ENCODE measurements at regions of chr9 and their contacts with region 1.

Region 1: DNA sequence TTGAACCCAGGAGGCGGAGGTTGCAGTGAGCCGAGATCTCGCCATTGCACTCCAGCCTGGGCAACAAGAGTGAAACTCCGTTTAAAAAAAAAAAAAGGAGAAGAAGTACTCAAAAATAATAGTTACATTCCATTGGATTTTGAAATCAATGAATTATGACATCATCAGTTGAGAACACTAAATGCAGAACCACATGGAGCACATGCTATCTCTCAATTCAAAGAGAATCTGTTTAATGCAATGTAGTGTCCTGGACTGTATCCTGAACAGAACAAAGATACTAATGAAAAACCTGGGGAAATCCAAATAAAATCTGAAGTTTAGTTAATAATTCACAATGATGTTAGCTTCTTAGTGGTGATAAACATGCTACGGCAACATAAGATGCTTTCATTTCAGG is 20.3 kb downstream of the CDC14B start:
- DNase-seq: no peak
- ATAC-seq: no peak
- H3K4me3 ChIP-seq: no peak overlapping the region
- H3K27ac ChIP-seq: no peak overlapping the region
- H3K4me1 ChIP-seq: no peaks in the 10 kb centered on the region
- H3K27me3 ChIP-seq: no peaks in the 10 kb centered on the region

Region 2: DNA sequence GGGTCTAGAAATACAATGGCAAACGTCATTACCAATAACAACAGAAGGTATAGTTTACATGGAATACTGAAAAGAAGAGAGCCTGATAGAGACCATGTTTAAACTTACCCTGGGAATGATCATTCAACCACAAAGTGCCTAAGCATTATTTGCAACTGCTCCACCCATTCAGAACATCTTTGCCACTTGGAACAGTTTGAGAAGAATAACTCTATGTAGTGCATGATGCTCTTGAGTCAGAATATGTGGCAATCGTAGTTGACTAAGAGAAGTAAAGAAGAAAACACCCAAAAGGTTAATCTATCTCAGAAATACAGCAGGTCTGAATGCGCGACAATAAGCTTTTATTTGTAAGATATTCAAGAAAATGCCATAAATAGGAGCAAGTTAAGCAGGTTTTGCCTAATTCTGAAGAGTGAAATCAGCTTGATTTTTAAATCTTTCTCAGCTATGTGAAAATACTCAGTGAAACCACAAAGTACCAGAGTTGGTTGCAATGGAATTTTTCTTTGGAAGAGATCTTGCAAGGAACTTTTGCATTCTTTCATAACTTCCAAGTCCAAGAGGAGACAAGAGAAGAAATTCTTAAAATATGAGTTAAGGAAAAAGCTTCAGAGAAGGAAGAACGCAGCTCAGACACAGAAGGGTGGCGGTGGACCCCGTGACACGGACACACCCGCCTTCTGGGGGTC is 85.0 kb before region 1 on chr9:
- intact Hi-C with region 1: loop called in 1 of 4 experiments (anchors 10 kb)
- DNase-seq: no peak
- ATAC-seq: no peak
- H3K4me3 ChIP-seq: no peak overlapping the region
- H3K27ac ChIP-seq: peak overlapping the region; percentile 20
- H3K4me1 ChIP-seq: no peaks in the 10 kb centered on the region
- H3K27me3 ChIP-seq: no peaks in the 10 kb centered on the region

Region 3: GRCh38 chr9:96644137-96644536 is 44.8 kb after region 1 on chr9:
- intact Hi-C with region 1: no loop called
- DNase-seq: no peak
- ATAC-seq: no peak
- H3K4me3 ChIP-seq: no peak overlapping the region
- H3K27ac ChIP-seq: no peak overlapping the region
- H3K4me1 ChIP-seq: no peaks in the 10 kb centered on the region
- H3K27me3 ChIP-seq: no peaks in the 10 kb centered on the region

Region 4: GRCh38 chr9:96654443-96655197 is 55.3 kb after region 1 on chr9:
- intact Hi-C with region 1: no loop called
- DNase-seq: peak; percentile 93 to 96 (median 96)
- ATAC-seq: peak; percentile 91 to 93
- H3K4me3 ChIP-seq: peak overlapping the region; percentile 93
- H3K27ac ChIP-seq: peak overlapping the region; percentile 99
- H3K4me1 ChIP-seq: peaks cover 8% of the 10 kb centered on the region
- H3K27me3 ChIP-seq: no peaks in the 10 kb centered on the region

Region 5: GRCh38 chr9:96667361-96667728 is 68.0 kb after region 1 on chr9:
- intact Hi-C with region 1: no loop called
- DNase-seq: no peak
- ATAC-seq: no peak
- H3K4me3 ChIP-seq: no peak overlapping the region
- H3K27ac ChIP-seq: no peak overlapping the region
- H3K4me1 ChIP-seq: no peaks in the 10 kb centered on the region
- H3K27me3 ChIP-seq: no peaks in the 10 kb centered on the region

Region 6: DNA sequence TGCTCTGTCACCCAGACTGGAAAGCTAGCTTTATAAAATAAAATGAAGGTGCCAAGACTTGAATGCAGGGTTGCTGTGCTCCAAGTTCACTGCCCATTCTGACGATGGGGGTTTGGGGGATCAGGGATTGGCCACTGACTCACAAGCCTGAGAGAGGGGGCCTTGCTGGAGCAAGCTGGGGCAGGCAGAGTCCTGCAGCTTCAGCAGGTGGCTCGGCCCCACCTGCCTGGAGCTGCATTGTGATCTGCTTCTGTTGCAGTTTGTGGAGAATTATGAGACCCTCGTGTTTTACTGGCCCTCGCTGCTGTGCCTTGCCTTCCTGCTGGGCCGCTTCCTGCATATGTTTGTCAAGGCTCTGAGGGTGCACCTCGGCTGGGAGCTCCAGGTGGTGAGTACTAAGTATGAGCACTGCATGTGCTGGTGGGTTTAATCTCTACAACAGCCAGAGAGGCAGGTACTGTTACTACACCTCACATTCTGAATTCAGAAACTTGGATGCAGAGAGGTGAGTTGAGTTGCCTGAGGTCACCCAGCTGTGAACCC is 677.1 kb after region 1 on chr9:
- intact Hi-C with region 1: no loop called
- DNase-seq: no peak
- ATAC-seq: no peak
- H3K4me3 ChIP-seq: no peak overlapping the region
- H3K27ac ChIP-seq: no peak overlapping the region
- H3K4me1 ChIP-seq: no peaks in the 10 kb centered on the region
- H3K27me3 ChIP-seq: no peaks in the 10 kb centered on the region

Measured in right cardiac atrium (tissue), 5 donors.